Activated CD4-positive, alpha-beta memory T cell treated with anti-CD3 and anti-CD28 coated beads for 36 hours (primary cell): ENCODE measurements at regions of chr12 and their contacts with region 1.

Region 1: GRCh38 chr12:116236148-116236731 is 41.3 kb downstream of the MED13L start:
- DNase-seq: peak; percentile 63
- H3K4me3 Mint-ChIP-seq: no peak overlapping the region
- H3K27ac Mint-ChIP-seq: peak overlapping the region; percentile 64
- H3K4me1 Mint-ChIP-seq: peaks cover 27% of the 10 kb centered on the region
- H3K27me3 Mint-ChIP-seq: no peaks in the 10 kb centered on the region

Region 2: GRCh38 chr12:115998119-115998633 is 238.1 kb before region 1 on chr12:
- CTCF ChIA-PET with region 1: interaction called, 8 read pairs
- POLR2A ChIA-PET with region 1: no interaction called
- intact Hi-C with region 1: loop called (anchors 2 kb)
- DNase-seq: peak; percentile 13
- H3K4me3 Mint-ChIP-seq: no peak overlapping the region
- H3K27ac Mint-ChIP-seq: no peak overlapping the region
- H3K4me1 Mint-ChIP-seq: peaks cover 4% of the 10 kb centered on the region
- H3K27me3 Mint-ChIP-seq: no peaks in the 10 kb centered on the region

Region 3: GRCh38 chr12:116015525-116015924 is 220.7 kb before region 1 on chr12:
- CTCF ChIA-PET with region 1: interaction called, 5 read pairs
- POLR2A ChIA-PET with region 1: no interaction called
- intact Hi-C with region 1: loop called (anchors 1 kb)
- DNase-seq: no peak
- H3K4me3 Mint-ChIP-seq: no peak overlapping the region
- H3K27ac Mint-ChIP-seq: no peak overlapping the region
- H3K4me1 Mint-ChIP-seq: peaks cover 2% of the 10 kb centered on the region
- H3K27me3 Mint-ChIP-seq: no peaks in the 10 kb centered on the region

Region 4: DNA sequence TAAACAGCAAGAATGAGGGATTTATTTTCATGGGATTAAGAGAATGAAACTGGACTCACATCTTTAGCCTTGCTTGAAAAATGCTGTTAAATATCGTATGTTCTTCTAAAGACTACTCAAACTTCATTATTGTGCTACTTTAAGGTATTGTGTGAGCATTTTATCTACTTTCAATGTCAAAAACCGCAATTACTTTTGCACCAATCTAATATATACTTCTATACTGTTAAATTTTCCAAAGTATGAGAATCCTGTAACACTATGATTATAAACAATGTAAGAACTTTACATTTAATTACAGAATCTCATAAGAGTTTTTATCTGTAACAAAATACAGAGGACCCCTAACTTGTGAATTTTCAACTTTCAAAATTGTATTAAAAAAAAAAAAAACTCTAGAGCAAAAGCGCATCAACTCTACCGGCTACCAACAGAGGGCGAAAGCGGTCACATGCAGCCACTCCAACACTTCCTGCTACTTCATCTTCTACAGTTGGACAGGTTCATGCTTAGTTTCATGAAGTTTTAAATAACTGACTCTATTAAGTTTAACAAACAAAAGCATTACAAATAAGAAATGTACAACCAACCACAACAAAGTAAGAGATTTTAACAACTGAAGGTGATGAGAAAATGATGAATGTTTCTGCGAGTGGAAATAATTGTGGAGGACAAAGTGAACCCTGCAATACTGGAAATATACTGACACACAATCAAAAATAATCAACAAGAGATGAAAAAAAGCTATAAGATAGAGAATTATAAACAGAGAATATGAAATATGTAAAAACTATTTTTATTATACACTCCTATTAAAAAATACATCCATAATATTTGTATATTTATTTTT is 169.6 kb before region 1 on chr12:
- CTCF ChIA-PET with region 1: interaction called, 6 read pairs
- POLR2A ChIA-PET with region 1: no interaction called
- intact Hi-C with region 1: loop called (anchors 2 kb)
- DNase-seq: peak; percentile 71
- H3K4me3 Mint-ChIP-seq: no peak overlapping the region
- H3K27ac Mint-ChIP-seq: no peak overlapping the region
- H3K4me1 Mint-ChIP-seq: peaks cover 34% of the 10 kb centered on the region
- H3K27me3 Mint-ChIP-seq: no peaks in the 10 kb centered on the region

Region 5: DNA sequence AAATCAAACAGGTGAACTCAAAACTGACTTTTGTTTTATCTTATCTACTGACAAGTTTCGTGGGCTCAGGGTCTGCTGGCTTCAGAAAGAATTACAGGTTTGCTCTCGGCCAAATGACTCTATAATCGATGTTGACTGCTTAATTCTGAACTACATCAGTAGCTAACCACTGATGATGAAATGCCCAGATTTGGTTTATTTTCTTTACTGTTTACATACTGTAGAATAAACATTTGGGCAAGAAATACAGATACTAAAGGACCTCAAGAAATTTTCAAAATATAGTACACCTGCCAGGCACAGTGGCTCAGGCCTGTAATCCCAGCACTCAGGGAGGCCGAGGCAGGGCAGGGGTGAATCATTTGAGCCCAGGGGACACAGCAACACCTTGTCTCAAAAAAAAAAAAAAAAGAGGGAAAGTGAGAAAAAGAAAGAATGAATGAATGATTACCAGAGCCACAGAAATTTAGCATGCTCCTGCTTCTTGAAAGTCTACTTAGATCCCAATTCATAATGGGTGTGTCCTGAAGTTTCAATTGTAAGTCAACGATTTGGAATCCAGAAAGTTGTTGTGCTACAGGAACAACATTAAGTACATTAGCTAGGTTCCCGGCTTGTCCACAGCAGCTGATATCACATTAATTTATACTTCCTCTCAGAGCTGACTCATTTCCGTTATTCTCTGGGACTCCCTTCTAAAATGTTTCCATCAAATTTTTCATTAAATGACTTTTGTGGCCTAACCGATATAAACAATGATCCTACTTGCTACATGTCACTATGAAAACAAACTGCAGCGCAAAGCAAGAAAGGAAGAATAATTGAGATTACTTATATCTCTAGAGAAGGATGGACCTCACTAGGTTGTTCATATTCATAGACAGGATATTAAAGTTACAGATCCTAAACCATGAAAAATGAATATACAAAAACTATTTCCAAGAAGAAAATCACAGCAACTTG is 93.0 kb before region 1 on chr12:
- CTCF ChIA-PET with region 1: interaction called, 9 read pairs
- POLR2A ChIA-PET with region 1: no interaction called
- intact Hi-C with region 1: loop called (anchors 2 kb)
- DNase-seq: no peak
- H3K4me3 Mint-ChIP-seq: no peak overlapping the region
- H3K27ac Mint-ChIP-seq: peak overlapping the region; percentile 42
- H3K4me1 Mint-ChIP-seq: peaks cover 51% of the 10 kb centered on the region
- H3K27me3 Mint-ChIP-seq: no peaks in the 10 kb centered on the region

Region 6: DNA sequence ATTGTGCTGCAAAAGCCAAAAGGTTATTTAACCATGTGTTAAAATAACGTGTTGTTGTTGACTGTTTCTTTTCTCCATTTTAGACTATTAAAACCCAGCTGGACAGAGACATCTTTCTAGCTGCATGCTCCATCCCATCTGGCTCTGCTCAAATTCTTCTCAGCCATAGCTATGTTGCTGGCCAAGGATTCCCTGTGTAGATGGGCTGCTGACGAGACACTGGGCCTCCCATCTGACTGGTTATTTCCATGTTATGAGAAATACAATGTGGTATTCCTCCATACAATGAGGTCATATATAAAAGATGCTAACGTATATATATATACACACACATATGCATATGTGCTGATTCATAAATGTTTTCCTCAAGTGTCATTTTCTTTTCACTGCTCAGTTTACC is 11.1 kb after region 1 on chr12:
- CTCF ChIA-PET with region 1: interaction called, 12 read pairs
- POLR2A ChIA-PET with region 1: no interaction called
- intact Hi-C with region 1: no loop called
- DNase-seq: no peak
- H3K4me3 Mint-ChIP-seq: no peak overlapping the region
- H3K27ac Mint-ChIP-seq: no peak overlapping the region
- H3K4me1 Mint-ChIP-seq: peaks cover 69% of the 10 kb centered on the region
- H3K27me3 Mint-ChIP-seq: no peaks in the 10 kb centered on the region

Region 7: GRCh38 chr12:116818948-116819832 is 583.0 kb after region 1 on chr12:
- CTCF ChIA-PET with region 1: no interaction called
- POLR2A ChIA-PET with region 1: no interaction called
- intact Hi-C with region 1: no loop called
- DNase-seq: peak; percentile 92
- H3K4me3 Mint-ChIP-seq: peak overlapping the region; percentile 93
- H3K27ac Mint-ChIP-seq: peak overlapping the region; percentile 85
- H3K4me1 Mint-ChIP-seq: peaks cover 15% of the 10 kb centered on the region
- H3K27me3 Mint-ChIP-seq: no peaks in the 10 kb centered on the region